ENCODE measurements at regions of chr16 and their contacts with region 1.

Region 1: DNA sequence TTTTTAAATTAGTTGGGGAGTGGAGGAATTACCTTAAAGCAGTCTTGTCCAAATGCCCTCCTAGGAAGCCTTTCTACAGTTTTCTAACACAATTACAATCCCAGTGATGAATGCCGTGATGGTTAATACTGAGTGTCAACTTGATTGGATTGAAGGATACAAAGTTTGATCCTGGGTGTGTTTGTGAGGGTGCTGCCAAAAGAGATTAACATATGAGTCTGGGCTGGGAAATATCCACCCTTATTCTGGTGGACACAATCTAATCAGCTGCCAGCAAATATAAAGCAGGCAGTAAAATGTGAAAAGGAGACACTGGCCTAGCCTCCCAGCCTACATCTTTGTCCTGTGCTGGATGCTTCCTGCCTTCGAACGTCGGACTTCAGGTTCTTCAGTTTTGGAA is 12.2 kb downstream of the ORC6 start:
- DNase-seq: no peak
- H3K4me3 ChIP-seq: no peak overlapping the region
- H3K27ac ChIP-seq: no peak overlapping the region
- H3K4me1 ChIP-seq: no peaks in the 10 kb centered on the region
- H3K27me3 ChIP-seq: no peaks in the 10 kb centered on the region
- CTCF ChIP-seq: no peak
- POLR2A ChIP-seq: no peak

Region 2: DNA sequence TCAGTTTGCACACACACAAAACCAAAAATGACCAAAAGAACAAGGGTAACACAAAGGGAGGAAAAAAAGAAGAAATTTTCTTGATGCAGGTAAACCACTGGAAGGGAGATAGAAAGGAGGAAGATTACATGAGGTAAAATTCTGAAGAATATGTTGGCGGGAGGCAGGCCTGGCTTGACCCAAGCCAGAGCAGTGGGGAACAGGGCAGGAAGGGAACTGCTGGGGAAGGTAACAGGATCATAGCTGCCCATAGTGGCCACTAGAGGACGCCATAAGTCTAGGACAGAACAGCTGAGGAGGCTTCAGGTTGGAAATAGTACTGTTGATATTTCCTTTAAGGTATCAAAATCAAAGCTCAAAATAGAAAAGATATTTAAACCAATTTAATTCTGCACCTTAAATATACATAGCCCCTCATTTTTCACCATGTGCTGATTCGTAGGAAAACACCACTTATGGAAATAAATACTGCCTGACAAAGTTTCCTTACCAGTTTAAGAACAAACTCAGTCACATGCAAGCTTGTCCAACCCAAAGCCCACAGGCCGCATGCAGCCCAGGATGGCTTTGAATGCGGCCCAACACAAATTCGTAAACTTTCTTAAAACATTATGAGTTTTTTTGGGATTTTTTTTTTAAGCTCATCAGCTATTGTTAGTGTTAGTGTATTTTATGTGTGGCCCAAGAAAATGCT is 28.1 kb before region 1 on chr16:
- intact Hi-C with region 1: no loop called
- DNase-seq: no peak
- H3K4me3 ChIP-seq: no peak overlapping the region
- H3K27ac ChIP-seq: no peak overlapping the region
- H3K4me1 ChIP-seq: no peaks in the 10 kb centered on the region
- H3K27me3 ChIP-seq: no peaks in the 10 kb centered on the region
- CTCF ChIP-seq: peak in 2 of 3 donors; percentile 51 to 66
- POLR2A ChIP-seq: no peak

Region 3: DNA sequence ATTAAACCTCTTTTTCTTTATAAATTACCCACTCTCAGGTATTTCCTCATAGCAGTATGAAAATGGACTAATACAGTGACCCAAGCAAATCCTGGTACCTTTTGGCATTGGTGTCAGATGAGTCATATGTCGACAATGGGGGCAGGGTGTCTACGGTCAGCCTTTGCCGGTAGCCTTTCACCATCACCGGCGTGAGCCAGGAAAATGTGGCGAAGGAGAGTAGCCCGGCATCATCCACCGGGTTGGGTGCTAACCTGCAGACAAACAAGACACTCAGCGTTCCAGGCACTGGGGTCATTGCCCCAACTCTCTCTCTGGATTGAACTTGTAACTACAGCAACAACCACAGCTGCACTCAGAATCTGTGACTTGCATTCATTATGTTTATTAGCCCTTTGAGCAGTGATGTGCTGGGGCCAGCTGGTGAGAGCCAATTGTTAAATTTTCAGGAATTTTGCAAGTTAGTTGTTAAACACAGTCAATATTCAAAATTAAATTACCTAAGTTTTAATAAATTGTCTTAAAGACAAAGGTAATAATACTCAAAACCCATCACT is 1442.3 kb after region 1 on chr16:
- intact Hi-C with region 1: loop called (anchors 5 kb)
- DNase-seq: no peak
- H3K4me3 ChIP-seq: no peak overlapping the region
- H3K27ac ChIP-seq: no peak overlapping the region
- H3K4me1 ChIP-seq: no peaks in the 10 kb centered on the region
- H3K27me3 ChIP-seq: no peaks in the 10 kb centered on the region
- CTCF ChIP-seq: no peak
- POLR2A ChIP-seq: no peak